Naive thymus-derived CD4-positive, alpha-beta T cell (primary cell): ENCODE measurements at regions of chr5 and their contacts with region 1.

Region 1: DNA sequence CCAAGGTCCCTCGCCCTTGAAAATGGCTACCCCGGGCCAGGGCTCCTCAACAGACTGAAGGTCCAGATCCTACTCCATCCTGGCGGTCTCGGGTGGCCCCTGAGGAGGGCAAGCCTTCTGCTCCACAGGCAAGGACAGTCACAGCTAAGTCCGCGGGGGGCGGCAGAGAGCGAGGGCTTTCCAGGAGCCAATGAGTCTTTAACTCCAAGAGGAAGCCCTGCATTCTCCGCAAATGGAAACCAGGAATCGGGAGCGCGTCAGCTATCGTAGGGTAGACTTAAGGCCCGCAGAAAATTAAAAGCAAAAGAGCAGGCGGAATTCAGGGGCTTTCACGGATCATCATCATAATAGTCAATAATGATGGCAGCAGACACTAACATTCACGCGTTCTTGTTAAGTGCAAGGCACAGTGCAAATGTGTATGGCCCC is 87.8 kb upstream of the TNFAIP8 start:
- DNase-seq: peak; percentile 66 to 91 (median 75)
- ATAC-seq: peak; percentile 89
- H3K4me3 ChIP-seq: peak overlapping the region; percentile 96
- H3K4me3 Mint-ChIP-seq: peak overlapping the region; percentile 95 to 100 (median 98)
- H3K27ac ChIP-seq: peak overlapping the region; percentile 85
- H3K27ac Mint-ChIP-seq: peak overlapping the region; percentile 87 to 99 (median 96)
- H3K4me1 ChIP-seq: peaks cover 24 to 32% of the 10 kb centered on the region in 2 donors
- H3K4me1 Mint-ChIP-seq: peaks cover 47 to 74% (median 72%) of the 10 kb centered on the region in 7 donors
- H3K27me3 ChIP-seq: no peaks in the 10 kb centered on the region
- H3K27me3 Mint-ChIP-seq: no peaks in the 10 kb centered on the region

Region 2: GRCh38 chr5:119070828-119071572 is 197.0 kb before region 1 on chr5 and contains the start of gene DMXL1:
- CTCF ChIA-PET with region 1: interaction called, 5 read pairs
- POLR2A ChIA-PET with region 1: interaction called, 10 read pairs
- intact Hi-C with region 1: loop called (anchors 1 kb)
- DNase-seq: peak; percentile 94 to 99 (median 98)
- ATAC-seq: peak; percentile 92
- H3K4me3 ChIP-seq: peak within 1 kb of the TSS; percentile 63
- H3K4me3 Mint-ChIP-seq: peak within 1 kb of the TSS; percentile 90 to 100 (median 98)
- H3K27ac ChIP-seq: peak within 1 kb of the TSS; percentile 93
- H3K27ac Mint-ChIP-seq: peak within 1 kb of the TSS; percentile 96 to 100 (median 99)
- H3K4me1 ChIP-seq: peaks cover 22 to 25% of the 10 kb centered on the region in 2 donors
- H3K4me1 Mint-ChIP-seq: peaks cover 24 to 44% (median 38%) of the 10 kb centered on the region in 7 donors
- H3K27me3 ChIP-seq: no peaks in the 10 kb centered on the region
- H3K27me3 Mint-ChIP-seq: peaks cover 0 to 2% (median 0%) of the 10 kb centered on the region in 5 donors
- total RNA-seq, gene DMXL1: 30.5 to 40.8 (median 32.4) TPM

Region 3: GRCh38 chr5:119302916-119303897 is 35.2 kb after region 1 on chr5:
- CTCF ChIA-PET with region 1: interaction called, 5 read pairs
- POLR2A ChIA-PET with region 1: interaction called, 466 read pairs
- intact Hi-C with region 1: loop called (anchors 1 kb)
- DNase-seq: peak in 3 of 9 donors; percentile 36 to 66 (median 51)
- ATAC-seq: peak; percentile 78
- H3K4me3 ChIP-seq: peak overlapping the region; percentile 24
- H3K4me3 Mint-ChIP-seq: peak overlapping the region; percentile 63 to 93 (median 76)
- H3K27ac ChIP-seq: peak overlapping the region; percentile 74
- H3K27ac Mint-ChIP-seq: peak overlapping the region; percentile 85 to 100 (median 98)
- H3K4me1 ChIP-seq: peaks cover 81 to 82% of the 10 kb centered on the region in 2 donors
- H3K4me1 Mint-ChIP-seq: peaks cover 57 to 97% (median 94%) of the 10 kb centered on the region in 7 donors
- H3K27me3 ChIP-seq: no peaks in the 10 kb centered on the region
- H3K27me3 Mint-ChIP-seq: no peaks in the 10 kb centered on the region

Region 4: GRCh38 chr5:119340597-119341218 is 72.7 kb after region 1 on chr5:
- CTCF ChIA-PET with region 1: interaction called, 5 read pairs
- POLR2A ChIA-PET with region 1: interaction called, 58 read pairs
- intact Hi-C with region 1: loop called (anchors 1 kb)
- DNase-seq: peak in 7 of 9 donors; percentile 57 to 72 (median 64)
- ATAC-seq: peak; percentile 71
- H3K4me3 ChIP-seq: peak overlapping the region; percentile 33
- H3K4me3 Mint-ChIP-seq: peak overlapping the region; percentile 64 to 94 (median 86)
- H3K27ac ChIP-seq: peak overlapping the region; percentile 78
- H3K27ac Mint-ChIP-seq: peak overlapping the region; percentile 84 to 99 (median 94)
- H3K4me1 ChIP-seq: peaks cover 91 to 95% of the 10 kb centered on the region in 2 donors
- H3K4me1 Mint-ChIP-seq: peaks cover 78 to 98% (median 97%) of the 10 kb centered on the region in 7 donors
- H3K27me3 ChIP-seq: no peaks in the 10 kb centered on the region
- H3K27me3 Mint-ChIP-seq: no peaks in the 10 kb centered on the region

Region 5: GRCh38 chr5:119411935-119412602 is 144.1 kb after region 1 on chr5:
- CTCF ChIA-PET with region 1: interaction called, 9 read pairs
- POLR2A ChIA-PET with region 1: interaction called, 5 read pairs
- intact Hi-C with region 1: loop called (anchors 1 kb)
- DNase-seq: peak in 7 of 9 donors; percentile 54 to 73 (median 68)
- ATAC-seq: peak; percentile 92
- H3K4me3 ChIP-seq: peak overlapping the region; percentile 59
- H3K4me3 Mint-ChIP-seq: peak overlapping the region; percentile 88 to 93 (median 91)
- H3K27ac ChIP-seq: peak overlapping the region; percentile 15
- H3K27ac Mint-ChIP-seq: peak overlapping the region; percentile 55 to 86 (median 76)
- H3K4me1 ChIP-seq: peaks cover 0 to 5% of the 10 kb centered on the region in 2 donors
- H3K4me1 Mint-ChIP-seq: peaks cover 11 to 32% (median 20%) of the 10 kb centered on the region in 7 donors
- H3K27me3 ChIP-seq: no peaks in the 10 kb centered on the region
- H3K27me3 Mint-ChIP-seq: peaks cover 0 to 5% (median 0%) of the 10 kb centered on the region in 5 donors